Left cardiac atrium (tissue), 4 donors: ENCODE measurements at regions of chr3 and their contacts with region 1.

Region 1: DNA sequence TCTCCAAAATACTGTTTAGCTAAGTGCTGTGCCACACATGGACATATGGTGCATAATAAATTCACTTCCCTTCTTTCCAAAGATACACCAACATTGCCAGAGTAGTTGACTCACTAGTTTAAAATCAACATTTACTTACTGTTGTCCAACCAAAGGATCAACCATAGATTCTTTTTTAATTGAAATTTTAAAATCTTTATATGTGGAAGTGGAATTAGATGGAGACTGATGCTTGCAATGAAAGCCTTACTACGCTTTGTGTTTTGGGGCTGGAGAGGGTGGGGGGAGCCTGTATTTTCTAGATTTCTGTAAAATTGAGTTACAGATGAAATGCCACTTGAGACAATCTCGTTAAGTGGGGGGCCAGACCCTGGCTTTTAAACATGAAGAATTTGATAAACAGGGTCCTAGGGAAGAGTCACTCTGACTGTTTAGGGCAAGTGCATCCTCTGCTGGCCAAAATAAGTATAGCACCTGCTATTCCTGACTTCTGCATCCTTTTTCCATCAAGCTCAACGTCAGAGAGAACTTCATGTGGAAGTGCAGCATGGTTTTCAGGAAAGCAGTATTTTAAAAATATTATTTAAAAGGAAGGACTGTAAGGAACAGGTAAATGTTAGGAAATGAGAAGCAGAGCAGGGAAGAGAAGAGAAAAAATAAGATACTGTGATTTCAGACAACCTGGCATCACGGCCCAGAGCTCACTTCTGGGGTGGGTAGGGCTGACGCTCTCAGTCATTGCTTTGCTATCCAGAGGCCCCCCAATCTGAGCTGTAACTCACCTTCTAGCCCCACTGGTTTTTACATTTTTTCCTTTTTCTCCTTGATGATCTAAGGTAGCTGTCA is 76.7 kb downstream of the BOC start:
- DNase-seq: no peak
- ATAC-seq: peak in 1 of 2 donors; percentile 53

Region 2: DNA sequence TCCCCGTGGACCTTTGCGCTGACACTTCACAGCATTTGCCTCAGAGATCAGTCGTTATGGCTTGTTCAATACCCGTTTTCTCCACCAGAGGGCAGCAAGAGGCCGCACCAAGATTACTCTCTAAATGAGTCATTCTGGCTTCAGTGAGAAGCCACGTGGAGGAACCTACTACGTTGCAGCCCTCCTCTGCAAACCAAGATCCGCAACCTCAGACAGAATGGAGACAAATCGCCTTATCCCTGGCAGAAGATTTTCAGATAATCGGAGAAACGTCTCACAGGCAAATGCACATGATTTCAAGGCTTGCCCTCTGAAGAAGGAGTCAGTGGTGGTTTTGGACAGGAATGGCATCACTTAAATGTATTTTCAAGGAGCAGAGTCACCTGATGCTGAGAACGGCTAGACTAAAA is 236.7 kb before region 1 on chr3:
- intact Hi-C with region 1: loop called (anchors 1 to 5 kb)
- DNase-seq: peak; percentile 80
- ATAC-seq: peak; percentile 93 to 97

Region 3: GRCh38 chr3:113128386-113129015 is 159.5 kb before region 1 on chr3:
- intact Hi-C with region 1: loop called in 1 of 2 experiments (anchors 5 kb)
- DNase-seq: no peak
- ATAC-seq: no peak

Region 4: DNA sequence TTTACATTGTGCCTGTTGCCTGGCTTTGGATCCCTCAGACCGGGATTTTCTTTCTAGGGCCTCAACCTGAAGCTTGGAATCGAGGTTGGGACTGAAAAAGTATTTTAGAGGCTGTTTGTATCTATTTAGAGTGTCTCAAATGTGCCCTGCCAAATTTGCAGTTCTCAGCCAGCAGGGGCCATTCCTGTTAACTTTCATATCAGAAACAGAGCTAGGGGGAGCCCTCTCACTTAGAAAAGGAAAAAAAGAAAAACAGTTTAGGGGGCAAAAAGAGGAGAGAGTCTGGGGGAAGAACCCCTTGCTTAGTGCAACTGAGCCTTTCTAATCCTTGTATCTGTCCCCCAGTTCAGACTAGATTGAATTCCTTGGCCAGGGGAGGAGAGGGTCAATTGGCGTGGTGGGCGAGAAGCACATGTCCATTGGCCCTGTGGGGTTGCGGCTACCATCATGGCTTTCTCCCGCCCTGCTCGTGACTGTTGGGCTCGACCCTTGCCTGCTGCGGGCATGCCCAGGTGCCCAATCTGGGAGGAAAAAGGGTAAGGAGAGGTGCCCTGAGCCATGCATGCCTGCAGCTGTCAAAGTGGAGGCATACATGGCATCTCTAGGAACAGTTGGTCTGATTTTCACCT is 51.7 kb after region 1 on chr3:
- intact Hi-C with region 1: no loop called
- DNase-seq: no peak
- ATAC-seq: no peak

Region 5: DNA sequence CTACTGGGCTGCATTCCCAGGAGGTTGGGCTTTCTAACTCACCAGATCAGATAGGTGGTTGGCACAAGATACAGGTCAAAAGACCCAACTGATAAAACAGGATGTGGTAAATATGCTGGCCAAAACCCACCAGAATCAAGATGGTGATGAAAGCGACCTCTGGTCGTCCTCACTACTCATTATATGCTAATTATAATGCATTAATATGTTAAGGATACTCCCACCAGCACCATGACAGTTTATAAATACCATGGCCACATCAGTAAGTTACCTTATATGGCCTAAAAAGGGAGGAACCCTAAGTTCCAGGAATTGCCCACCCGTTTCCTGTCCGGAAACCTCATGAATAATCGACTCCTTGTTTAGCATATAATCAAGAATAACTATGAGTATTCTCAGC is 121.7 kb after region 1 on chr3:
- intact Hi-C with region 1: no loop called
- DNase-seq: no peak
- ATAC-seq: no peak